ENCODE measurements at regions of chr12 and their contacts with region 1.

Region 1: DNA sequence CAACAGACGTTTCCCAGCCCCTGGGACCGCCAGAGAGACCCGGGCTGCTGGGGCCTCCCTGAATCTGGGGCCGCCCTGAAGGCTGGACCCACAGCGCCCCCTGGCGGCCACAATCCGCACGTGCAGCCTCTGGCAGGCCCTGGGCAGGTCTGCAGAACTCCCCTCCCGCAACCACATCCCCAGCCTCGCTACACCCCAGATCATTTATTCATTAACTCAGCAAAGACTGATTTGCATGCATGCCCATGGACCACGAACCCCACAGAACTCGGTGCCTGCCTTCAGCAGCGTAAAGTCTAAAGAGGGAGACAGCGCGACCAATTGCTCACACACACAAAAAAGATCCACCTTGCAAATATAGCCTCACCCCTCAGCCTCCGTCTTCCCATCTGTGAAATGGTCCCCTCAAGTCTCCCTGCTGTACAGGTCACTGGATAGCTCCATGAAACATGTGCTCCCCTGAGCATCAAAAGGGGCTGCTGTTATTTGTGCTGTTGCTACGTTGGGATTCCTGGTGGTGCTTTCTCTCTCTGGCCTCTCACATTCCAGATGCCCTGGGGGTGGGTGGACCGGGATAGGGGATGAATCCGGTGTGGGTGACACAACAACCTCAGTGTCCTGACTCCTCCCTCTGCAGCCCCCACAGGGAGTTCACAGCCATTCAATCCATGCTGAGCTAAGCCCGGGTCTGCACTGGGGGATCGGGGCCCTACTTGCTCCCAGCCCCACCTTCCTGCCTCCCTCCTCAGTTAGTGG is 96.4 kb downstream of the SCARB1 start:
- DNase-seq: peak; percentile 88
- H3K4me3 Mint-ChIP-seq: no peak overlapping the region
- H3K27ac Mint-ChIP-seq: no peak overlapping the region
- H3K4me1 Mint-ChIP-seq: peaks cover 21% of the 10 kb centered on the region
- H3K27me3 Mint-ChIP-seq: peaks cover 9% of the 10 kb centered on the region

Region 2: GRCh38 chr12:123905319-123905925 is 861.8 kb before region 1 on chr12:
- CTCF ChIA-PET with region 1: no interaction called
- intact Hi-C with region 1: loop called (anchors 10 kb)
- DNase-seq: peak; percentile 87
- H3K4me3 Mint-ChIP-seq: no peak overlapping the region
- H3K27ac Mint-ChIP-seq: peak overlapping the region; percentile 39
- H3K4me1 Mint-ChIP-seq: peaks cover 9% of the 10 kb centered on the region
- H3K27me3 Mint-ChIP-seq: no peaks in the 10 kb centered on the region

Region 3: GRCh38 chr12:124162151-124162989 is 604.9 kb before region 1 on chr12:
- CTCF ChIA-PET with region 1: no interaction called
- intact Hi-C with region 1: loop called (anchors 2 kb)
- DNase-seq: peak; percentile 42
- H3K4me3 Mint-ChIP-seq: no peak overlapping the region
- H3K27ac Mint-ChIP-seq: no peak overlapping the region
- H3K4me1 Mint-ChIP-seq: no peaks in the 10 kb centered on the region
- H3K27me3 Mint-ChIP-seq: no peaks in the 10 kb centered on the region

Region 4: DNA sequence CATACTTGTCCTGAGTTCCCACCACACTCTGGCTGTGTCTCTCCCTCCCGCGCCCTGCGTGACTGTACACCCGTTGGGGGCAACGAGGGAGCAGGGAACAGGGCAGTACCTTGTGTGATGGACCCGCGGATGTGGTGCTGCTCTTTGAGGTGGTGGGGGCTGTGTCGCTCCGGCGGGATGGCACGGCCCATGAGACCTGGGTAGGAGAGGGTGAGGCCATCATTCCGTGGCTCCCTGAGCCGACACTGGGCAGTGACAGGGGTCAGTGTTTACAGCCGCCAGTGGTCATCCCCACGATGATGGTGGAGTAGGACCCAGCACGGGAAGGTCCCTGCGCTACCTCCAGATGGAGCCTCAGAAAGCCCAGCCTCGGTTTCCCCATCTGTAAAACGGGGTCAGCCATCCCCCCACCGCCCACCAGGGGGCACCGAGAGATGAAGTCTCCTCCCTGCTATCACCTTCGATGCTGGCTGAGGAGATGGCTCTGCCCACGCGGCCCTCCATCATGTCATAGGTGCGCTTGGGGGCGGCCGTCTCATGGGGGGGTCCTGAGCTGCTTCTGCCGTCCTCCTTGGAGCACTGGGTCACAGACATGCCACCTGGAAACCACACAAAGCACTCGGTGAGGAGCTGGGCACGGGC is 419.4 kb before region 1 on chr12:
- CTCF ChIA-PET with region 1: interaction called, 8 read pairs
- intact Hi-C with region 1: loop called (anchors 2 kb)
- DNase-seq: peak; percentile 43
- H3K4me3 Mint-ChIP-seq: no peak overlapping the region
- H3K27ac Mint-ChIP-seq: no peak overlapping the region
- H3K4me1 Mint-ChIP-seq: no peaks in the 10 kb centered on the region
- H3K27me3 Mint-ChIP-seq: no peaks in the 10 kb centered on the region

Region 5: GRCh38 chr12:124673801-124674617 is 93.2 kb before region 1 on chr12:
- CTCF ChIA-PET with region 1: no interaction called
- intact Hi-C with region 1: no loop called
- DNase-seq: no peak
- H3K4me3 Mint-ChIP-seq: no peak overlapping the region
- H3K27ac Mint-ChIP-seq: no peak overlapping the region
- H3K4me1 Mint-ChIP-seq: no peaks in the 10 kb centered on the region
- H3K27me3 Mint-ChIP-seq: no peaks in the 10 kb centered on the region

Region 6: GRCh38 chr12:124687917-124688316 is 79.3 kb before region 1 on chr12:
- CTCF ChIA-PET with region 1: no interaction called
- intact Hi-C with region 1: no loop called
- DNase-seq: peak; percentile 52
- H3K4me3 Mint-ChIP-seq: no peak overlapping the region
- H3K27ac Mint-ChIP-seq: no peak overlapping the region
- H3K4me1 Mint-ChIP-seq: peaks cover 32% of the 10 kb centered on the region
- H3K27me3 Mint-ChIP-seq: no peaks in the 10 kb centered on the region

Region 7: DNA sequence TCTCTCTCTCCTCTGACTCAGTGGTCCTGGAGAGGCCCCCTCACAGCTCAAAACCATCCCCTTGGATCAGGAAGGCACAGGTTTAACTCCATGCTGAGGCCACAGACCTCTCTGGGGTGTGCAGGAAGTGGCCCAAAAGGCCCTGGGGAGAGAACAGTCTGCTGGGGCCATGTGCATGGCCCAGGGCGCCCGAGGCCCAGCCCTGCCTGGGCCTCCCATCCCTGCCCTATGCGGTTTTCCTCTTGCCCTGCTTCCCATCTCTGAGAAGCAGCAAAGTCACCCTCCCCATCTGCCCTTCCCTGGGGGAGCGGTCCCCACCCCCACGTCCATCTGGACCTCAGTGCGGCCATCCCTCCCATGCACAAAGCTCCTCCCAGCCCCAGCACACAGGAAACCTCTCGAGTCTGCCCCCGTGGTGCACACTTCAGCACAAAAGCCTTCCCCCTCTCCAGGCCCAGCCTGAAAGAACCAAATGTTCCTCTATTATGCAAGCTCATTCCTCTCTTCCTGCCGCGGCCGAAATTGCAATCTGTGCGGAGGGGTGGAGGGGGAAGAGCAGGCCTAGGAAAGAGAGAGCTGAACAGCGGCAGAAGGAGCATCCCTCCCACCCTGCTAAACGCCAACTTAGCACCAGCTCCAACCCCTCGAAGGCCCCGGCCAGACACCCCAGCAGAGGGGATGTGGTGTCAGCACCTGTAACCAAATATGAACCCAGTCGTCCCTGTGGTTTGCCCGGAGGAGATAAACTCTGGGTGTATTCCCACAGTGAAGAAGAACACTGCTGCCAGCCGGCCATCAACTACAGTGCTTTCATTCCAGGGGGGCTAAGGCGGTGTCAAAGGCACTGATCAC is 12.1 kb before region 1 on chr12:
- CTCF ChIA-PET with region 1: interaction called, 13 read pairs
- intact Hi-C with region 1: no loop called
- DNase-seq: no peak
- H3K4me3 Mint-ChIP-seq: no peak overlapping the region
- H3K27ac Mint-ChIP-seq: no peak overlapping the region
- H3K4me1 Mint-ChIP-seq: peaks cover 12% of the 10 kb centered on the region
- H3K27me3 Mint-ChIP-seq: peaks cover 11% of the 10 kb centered on the region

Region 8: GRCh38 chr12:124795081-124795948 is 28.1 kb after region 1 on chr12:
- CTCF ChIA-PET with region 1: no interaction called
- intact Hi-C with region 1: no loop called
- DNase-seq: no peak
- H3K4me3 Mint-ChIP-seq: no peak overlapping the region
- H3K27ac Mint-ChIP-seq: no peak overlapping the region
- H3K4me1 Mint-ChIP-seq: peaks cover 13% of the 10 kb centered on the region
- H3K27me3 Mint-ChIP-seq: no peaks in the 10 kb centered on the region

Region 9: DNA sequence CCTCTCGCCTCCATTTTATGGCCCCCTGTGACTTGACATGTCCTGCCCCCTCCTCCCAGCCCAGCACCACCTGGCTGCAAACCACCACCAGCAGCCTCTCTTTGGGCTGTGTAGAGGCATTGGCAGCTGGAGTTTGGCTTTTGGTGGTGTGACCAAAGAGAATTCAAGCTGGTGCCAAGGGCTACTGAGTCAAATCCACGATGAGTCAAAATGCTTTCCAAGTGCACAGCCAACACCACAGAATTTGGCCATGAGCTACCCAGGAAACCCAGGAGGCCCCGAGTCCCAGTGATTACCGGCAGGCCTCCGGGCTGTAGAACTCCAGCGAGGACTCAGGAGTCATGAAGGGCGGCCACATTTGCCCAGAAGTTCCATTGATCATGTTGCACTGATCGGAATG is 42.6 kb after region 1 on chr12:
- CTCF ChIA-PET with region 1: no interaction called
- intact Hi-C with region 1: no loop called
- DNase-seq: no peak
- H3K4me3 Mint-ChIP-seq: no peak overlapping the region
- H3K27ac Mint-ChIP-seq: no peak overlapping the region
- H3K4me1 Mint-ChIP-seq: no peaks in the 10 kb centered on the region
- H3K27me3 Mint-ChIP-seq: no peaks in the 10 kb centered on the region

Measured in activated naive CD4-positive, alpha-beta T cell treated with anti-CD3 and anti-CD28 coated beads for 36 hours (primary cell).